CD4-positive, alpha-beta T cell (primary cell): ENCODE measurements at regions of chr10 and their contacts with region 1.

Region 1: GRCh38 chr10:128211953-128212727 is 85.9 kb upstream of the MKI67 start:
- DNase-seq: peak; percentile 60 to 93 (median 77)
- ATAC-seq: peak; percentile 78
- H3K4me3 ChIP-seq: peak overlapping the region; percentile 53
- H3K4me3 Mint-ChIP-seq: peak overlapping the region; percentile 96
- H3K27ac ChIP-seq: no peak overlapping the region
- H3K27ac Mint-ChIP-seq: peak overlapping the region; percentile 79
- H3K4me1 ChIP-seq: peaks cover 22% of the 10 kb centered on the region
- H3K4me1 Mint-ChIP-seq: peaks cover 26% of the 10 kb centered on the region
- H3K27me3 ChIP-seq: no peaks in the 10 kb centered on the region
- H3K27me3 Mint-ChIP-seq: no peaks in the 10 kb centered on the region
- CTCF ChIP-seq: peak; percentile 98

Region 2: GRCh38 chr10:128125944-128126764 is 86.0 kb before region 1 on chr10 and contains the start of gene MKI67:
- CTCF ChIA-PET with region 1: interaction called, 3 read pairs
- POLR2A ChIA-PET with region 1: no interaction called
- intact Hi-C with region 1: loop called in 1 of 2 experiments (anchors 1 kb)
- DNase-seq: peak; percentile 81 to 96 (median 84)
- ATAC-seq: peak; percentile 93
- H3K4me3 ChIP-seq: peak within 1 kb of the TSS; percentile 61
- H3K4me3 Mint-ChIP-seq: peak within 1 kb of the TSS; percentile 91
- H3K27ac ChIP-seq: no peak within 1 kb of the TSS
- H3K27ac Mint-ChIP-seq: peak within 1 kb of the TSS; percentile 16
- H3K4me1 ChIP-seq: peaks cover 20% of the 10 kb centered on the region
- H3K4me1 Mint-ChIP-seq: peaks cover 28% of the 10 kb centered on the region
- H3K27me3 ChIP-seq: peaks cover 16 to 28% of the 10 kb centered on the region in 2 experiments
- H3K27me3 Mint-ChIP-seq: peaks cover 41% of the 10 kb centered on the region
- CTCF ChIP-seq: no peak
- total RNA-seq, gene MKI67: 0.92 to 1.2 TPM

Region 3: DNA sequence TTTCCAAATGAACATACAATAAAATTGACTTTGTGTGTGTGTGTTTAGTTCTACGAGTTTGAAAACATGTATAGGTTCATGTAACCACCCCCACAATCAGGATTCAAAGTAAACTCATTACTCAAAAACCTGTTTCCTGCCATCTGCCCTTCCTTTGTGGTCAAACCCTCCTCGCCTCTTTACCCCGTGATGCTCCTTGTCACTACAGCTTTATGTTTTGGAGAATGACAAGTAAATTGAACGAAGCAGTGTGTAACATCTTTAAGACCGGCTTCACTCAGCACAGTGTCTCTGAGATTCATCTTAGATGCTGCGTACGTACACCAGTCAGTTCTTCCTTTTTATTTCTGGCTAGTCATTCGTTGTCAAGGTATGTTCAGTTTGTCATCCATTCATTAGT is 31.3 kb before region 1 on chr10:
- CTCF ChIA-PET with region 1: interaction called, 12 read pairs
- POLR2A ChIA-PET with region 1: interaction called, 10 read pairs
- intact Hi-C with region 1: no loop called
- DNase-seq: peak in 9 of 14 experiments; percentile 11 to 80 (median 34)
- ATAC-seq: peak; percentile 93
- H3K4me3 ChIP-seq: peak overlapping the region; percentile 37
- H3K4me3 Mint-ChIP-seq: peak overlapping the region; percentile 46
- H3K27ac ChIP-seq: peak overlapping the region in 1 of 2 donors; percentile 52
- H3K27ac Mint-ChIP-seq: peak overlapping the region; percentile 34
- H3K4me1 ChIP-seq: peaks cover 11% of the 10 kb centered on the region
- H3K4me1 Mint-ChIP-seq: peaks cover 39% of the 10 kb centered on the region
- H3K27me3 ChIP-seq: no peaks in the 10 kb centered on the region
- H3K27me3 Mint-ChIP-seq: no peaks in the 10 kb centered on the region
- CTCF ChIP-seq: no peak

Region 4: GRCh38 chr10:128280271-128280670 is 68.1 kb after region 1 on chr10:
- CTCF ChIA-PET with region 1: no interaction called
- POLR2A ChIA-PET with region 1: no interaction called
- intact Hi-C with region 1: no loop called
- DNase-seq: no peak
- ATAC-seq: no peak
- H3K4me3 ChIP-seq: no peak overlapping the region
- H3K4me3 Mint-ChIP-seq: no peak overlapping the region
- H3K27ac ChIP-seq: no peak overlapping the region
- H3K27ac Mint-ChIP-seq: no peak overlapping the region
- H3K4me1 ChIP-seq: no peaks in the 10 kb centered on the region
- H3K4me1 Mint-ChIP-seq: peaks cover 2% of the 10 kb centered on the region
- H3K27me3 ChIP-seq: peaks cover 4 to 10% of the 10 kb centered on the region in 2 experiments
- H3K27me3 Mint-ChIP-seq: peaks cover 46% of the 10 kb centered on the region
- CTCF ChIP-seq: no peak

Region 5: DNA sequence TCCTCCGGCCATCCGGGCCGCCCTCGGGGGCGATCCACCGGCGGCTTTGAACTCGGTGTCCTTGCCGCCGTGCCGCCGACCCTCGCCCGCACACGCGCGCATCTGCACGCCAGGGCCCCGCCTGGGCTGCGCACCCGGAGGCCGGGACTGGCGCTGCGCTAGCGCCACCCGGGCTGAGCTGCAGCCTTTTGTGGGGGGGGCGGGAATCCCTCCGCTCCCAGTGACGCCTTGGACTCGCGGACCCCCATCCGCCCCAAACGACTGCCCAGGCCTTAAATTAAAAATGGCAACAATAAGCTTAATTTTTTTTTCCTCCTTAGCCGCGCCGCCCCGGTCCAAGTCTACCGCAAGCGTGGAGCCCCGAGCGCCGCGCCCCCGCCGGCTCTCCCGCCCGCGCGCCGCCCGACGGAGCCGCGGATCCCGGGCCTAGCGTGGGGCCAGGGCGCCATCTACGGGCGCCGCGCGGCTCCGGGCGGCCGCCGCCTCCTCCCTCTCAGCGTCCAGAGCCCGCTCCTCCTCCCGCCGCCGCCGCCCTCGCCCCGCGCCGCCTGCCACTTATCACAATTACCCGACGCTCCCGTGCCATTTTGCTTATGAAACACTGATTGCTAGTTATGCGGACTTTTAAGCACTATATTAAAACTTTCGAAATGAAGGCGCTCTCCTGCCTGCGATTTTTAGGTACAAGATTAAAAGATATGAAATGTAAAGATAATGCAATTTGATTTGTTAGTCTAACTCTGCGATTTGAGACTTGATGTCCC is 1759.4 kb after region 1 on chr10:
- CTCF ChIA-PET with region 1: no interaction called
- POLR2A ChIA-PET with region 1: no interaction called
- intact Hi-C with region 1: loop called (anchors 5 kb)
- DNase-seq: peak in 5 of 14 experiments; percentile 10 to 68 (median 35)
- ATAC-seq: peak; percentile 64
- H3K4me3 ChIP-seq: no peak overlapping the region
- H3K4me3 Mint-ChIP-seq: no peak overlapping the region
- H3K27ac ChIP-seq: no peak overlapping the region
- H3K27ac Mint-ChIP-seq: no peak overlapping the region
- H3K4me1 ChIP-seq: peaks cover 25% of the 10 kb centered on the region
- H3K4me1 Mint-ChIP-seq: peaks cover 13% of the 10 kb centered on the region
- H3K27me3 ChIP-seq: peaks cover 65 to 87% of the 10 kb centered on the region in 2 experiments
- H3K27me3 Mint-ChIP-seq: peaks cover 75% of the 10 kb centered on the region
- CTCF ChIP-seq: no peak

Region 6: DNA sequence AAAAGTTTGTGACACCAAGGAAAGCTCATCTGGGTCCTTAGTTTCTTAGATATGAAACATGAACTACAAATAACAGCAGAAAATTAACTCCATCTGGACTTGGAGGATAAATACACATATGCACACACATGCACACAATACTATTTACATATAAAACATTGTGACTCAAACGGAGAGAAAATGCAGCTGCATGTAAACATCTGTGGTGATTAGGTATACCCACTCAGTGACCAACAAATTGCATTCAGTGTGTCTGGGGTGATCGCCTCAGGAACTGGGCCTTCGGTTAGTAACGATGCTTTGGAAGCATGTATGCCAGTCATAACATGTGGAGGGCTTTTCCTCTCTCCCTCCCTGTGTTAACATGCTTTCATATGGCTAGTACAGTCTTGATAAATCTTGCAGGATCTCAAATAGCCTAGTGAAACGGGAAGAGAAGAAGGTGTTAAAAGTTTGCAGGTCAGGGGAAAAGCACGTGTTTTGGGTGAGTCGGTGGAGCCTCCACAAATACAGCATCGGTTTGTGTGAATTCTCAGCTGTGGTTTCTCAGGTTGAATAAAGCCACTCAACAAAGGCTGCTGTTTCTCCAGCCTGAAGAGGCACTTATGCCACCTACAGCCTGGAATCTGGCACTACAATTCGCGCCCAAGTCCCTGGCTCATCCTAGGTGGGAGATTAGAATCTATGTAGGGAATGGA is 1915.4 kb after region 1 on chr10:
- CTCF ChIA-PET with region 1: interaction called, 4 read pairs
- POLR2A ChIA-PET with region 1: no interaction called
- intact Hi-C with region 1: loop called in 1 of 2 experiments (anchors 5 kb)
- DNase-seq: peak in 13 of 14 experiments; percentile 29 to 80 (median 39)
- ATAC-seq: peak; percentile 93
- H3K4me3 ChIP-seq: no peak overlapping the region
- H3K4me3 Mint-ChIP-seq: no peak overlapping the region
- H3K27ac ChIP-seq: no peak overlapping the region
- H3K27ac Mint-ChIP-seq: no peak overlapping the region
- H3K4me1 ChIP-seq: peaks cover 4% of the 10 kb centered on the region
- H3K4me1 Mint-ChIP-seq: peaks cover 5% of the 10 kb centered on the region
- H3K27me3 ChIP-seq: peaks cover 7 to 17% of the 10 kb centered on the region in 2 experiments
- H3K27me3 Mint-ChIP-seq: peaks cover 33% of the 10 kb centered on the region
- CTCF ChIP-seq: peak; percentile 92